Endothelial cell of umbilical vein (primary cell): ENCODE measurements at regions of chr7 and their contacts with region 1.

Region 1: DNA sequence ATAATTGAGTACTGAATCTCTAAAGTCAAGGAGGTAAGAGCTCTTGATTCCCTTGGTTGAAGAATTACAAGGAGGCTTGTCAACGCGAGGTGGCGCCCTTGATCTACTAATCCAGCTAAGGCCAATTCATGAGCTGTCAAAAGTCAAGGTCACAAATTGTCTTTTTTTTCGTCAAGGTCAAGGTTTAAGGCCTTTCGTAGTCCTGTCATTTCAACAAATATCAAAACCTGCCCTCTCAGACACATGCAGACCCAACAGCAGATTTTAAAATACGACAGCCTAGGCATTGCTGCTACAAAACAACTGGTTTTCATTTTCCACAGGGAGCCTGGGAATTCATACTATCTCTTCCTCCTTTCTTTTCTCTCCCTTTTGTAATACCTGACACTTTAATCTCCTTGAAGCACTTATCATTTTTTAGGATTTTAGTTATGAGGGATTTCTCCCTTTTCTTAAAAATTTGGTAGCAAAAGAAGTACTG is 3.6 kb downstream of the HOXA13 start:
- DNase-seq: peak; percentile 84
- H3K4me3 ChIP-seq: no peak overlapping the region
- H3K27ac ChIP-seq: no peak overlapping the region
- H3K4me1 ChIP-seq: peaks cover 16% of the 10 kb centered on the region
- H3K27me3 ChIP-seq: peaks cover 52 to 78% of the 10 kb centered on the region in 2 experiments
- CTCF ChIP-seq: peak; percentile 66 to 68
- POLR2A ChIP-seq: no peak

Region 2: DNA sequence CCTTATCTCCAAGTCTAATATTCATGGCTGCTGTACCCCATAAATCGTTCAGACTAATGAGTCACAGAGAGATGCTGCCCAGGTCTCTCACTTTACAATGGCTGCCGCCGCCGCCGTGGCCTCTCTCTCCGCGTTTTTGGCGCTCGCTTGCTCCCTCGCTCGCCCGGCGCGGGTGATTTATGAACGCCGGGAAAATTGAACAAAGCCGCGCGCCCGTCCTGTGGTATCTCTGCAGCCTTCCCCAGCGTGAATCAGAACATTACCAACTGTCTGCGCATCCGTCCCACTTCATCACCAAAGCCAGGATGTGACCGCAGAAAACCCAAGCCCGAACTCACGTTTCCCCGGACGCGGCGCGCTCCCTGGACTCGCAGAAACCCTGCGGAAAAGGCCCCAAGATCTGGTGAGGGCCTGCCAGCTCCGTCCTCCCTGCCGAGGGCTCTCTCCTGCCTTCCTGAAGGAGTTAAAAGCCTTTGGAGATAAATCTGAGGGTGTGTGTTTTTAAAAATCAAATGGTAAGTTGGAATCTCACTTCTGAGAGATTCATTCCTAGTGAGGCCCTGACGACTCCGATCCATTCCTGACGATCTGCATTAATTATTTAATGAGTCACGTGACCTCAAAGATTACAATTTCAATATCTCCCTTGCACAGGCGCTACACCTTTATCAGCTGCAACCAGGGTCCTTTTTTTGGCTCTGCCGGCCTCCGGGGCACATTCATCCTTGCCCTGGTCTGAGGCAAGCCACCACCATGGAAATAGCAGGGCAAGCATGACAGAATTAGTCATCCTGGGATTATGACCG is 72.0 kb before region 1 on chr7:
- CTCF ChIA-PET with region 1: no interaction called
- POLR2A ChIA-PET with region 1: no interaction called
- dilution Hi-C with region 1: no loop called
- intact Hi-C with region 1: no loop called
- DNase-seq: peak; percentile 58
- H3K4me3 ChIP-seq: peak overlapping the region in 1 of 3 experiments; percentile 36
- H3K27ac ChIP-seq: peak overlapping the region; percentile 96
- H3K4me1 ChIP-seq: peaks cover 75% of the 10 kb centered on the region
- H3K27me3 ChIP-seq: no peaks in the 10 kb centered on the region
- CTCF ChIP-seq: no peak
- POLR2A ChIP-seq: no peak

Region 3: GRCh38 chr7:27210441-27211083 is 14.2 kb after region 1 on chr7:
- CTCF ChIA-PET with region 1: interaction called, 22 read pairs
- POLR2A ChIA-PET with region 1: no interaction called
- dilution Hi-C with region 1: no loop called
- intact Hi-C with region 1: no loop called
- DNase-seq: no peak
- H3K4me3 ChIP-seq: peak overlapping the region in 1 of 3 experiments; percentile 29
- H3K27ac ChIP-seq: no peak overlapping the region
- H3K4me1 ChIP-seq: peaks cover 15% of the 10 kb centered on the region
- H3K27me3 ChIP-seq: peaks cover 73 to 77% of the 10 kb centered on the region in 2 experiments
- CTCF ChIP-seq: peak; percentile 56 to 82
- POLR2A ChIP-seq: no peak

Region 4: DNA sequence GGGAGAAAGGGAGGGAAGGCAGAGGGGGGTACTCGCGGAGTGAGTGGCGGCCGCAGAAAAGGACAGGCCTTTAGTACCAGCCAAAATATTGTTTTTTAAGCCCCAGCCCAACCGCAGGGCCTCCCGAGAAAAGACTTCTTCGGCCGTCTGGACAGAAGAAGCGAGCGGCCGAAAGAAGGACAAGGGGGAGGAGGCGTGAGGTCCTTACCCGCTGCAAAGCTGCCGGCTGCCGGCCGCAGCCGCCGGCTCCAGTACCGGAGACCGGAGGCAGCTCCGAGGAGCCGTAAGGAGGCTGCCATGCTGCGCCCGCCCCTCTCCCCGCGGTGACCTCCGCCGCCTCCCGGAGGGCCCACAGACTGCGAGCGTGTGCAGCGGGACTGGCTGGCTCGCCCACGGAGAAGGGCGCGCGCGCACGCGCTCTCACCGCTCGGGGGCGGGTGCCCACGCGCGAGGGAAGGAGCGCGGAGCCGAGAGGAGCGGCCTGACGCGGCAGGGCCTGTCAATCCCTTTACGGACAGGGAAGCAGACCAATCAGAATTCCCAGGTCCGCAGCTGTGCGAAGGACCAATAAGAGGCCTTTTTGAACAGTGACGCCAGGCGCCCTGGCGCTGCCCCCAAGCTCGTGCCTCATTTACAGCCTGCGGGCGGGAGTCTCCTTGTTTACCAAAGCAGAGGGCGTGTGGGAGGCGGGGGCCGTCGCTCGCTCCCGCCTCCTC is 466.3 kb after region 1 on chr7 and contains the start of gene HIBADH:
- CTCF ChIA-PET with region 1: interaction called, 12 read pairs
- POLR2A ChIA-PET with region 1: no interaction called
- dilution Hi-C with region 1: no loop called
- intact Hi-C with region 1: no loop called
- DNase-seq: peak; percentile 99
- H3K4me3 ChIP-seq: peak within 1 kb of the TSS; percentile 63 to 83 (median 69)
- H3K27ac ChIP-seq: peak within 1 kb of the TSS; percentile 74
- H3K4me1 ChIP-seq: peaks cover 7% of the 10 kb centered on the region
- H3K27me3 ChIP-seq: no peaks in the 10 kb centered on the region
- CTCF ChIP-seq: no peak
- POLR2A ChIP-seq: peak; percentile 70
- total RNA-seq, gene HIBADH: 19.7 and 22.6 TPM in 2 replicates

Region 5: DNA sequence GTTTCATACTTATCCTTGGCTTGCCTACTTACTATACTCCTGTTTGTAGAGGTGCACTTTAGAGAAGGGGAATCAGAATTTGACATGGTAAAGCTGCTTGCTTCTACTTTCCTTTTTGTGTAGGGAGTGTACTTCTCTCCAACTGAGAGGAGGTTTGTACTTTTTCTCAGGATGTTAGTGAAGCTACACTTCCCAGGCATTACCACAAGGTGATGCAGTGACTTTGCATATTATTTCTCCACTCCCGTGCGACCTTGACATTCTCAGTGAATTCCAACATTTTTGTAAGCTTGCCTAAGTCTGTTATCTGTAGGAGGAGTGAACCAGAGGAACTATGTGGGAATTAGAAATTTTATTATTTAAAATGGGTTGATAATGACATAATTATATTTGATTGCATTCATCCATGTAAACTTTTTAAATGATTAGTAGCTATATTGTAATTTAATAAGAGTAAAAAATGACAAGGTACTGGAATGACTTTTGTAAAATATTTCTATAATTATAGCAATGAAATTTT is 548.8 kb after region 1 on chr7:
- CTCF ChIA-PET with region 1: interaction called, 31 read pairs
- POLR2A ChIA-PET with region 1: no interaction called
- dilution Hi-C with region 1: no loop called
- intact Hi-C with region 1: loop called (anchors 1 kb)
- DNase-seq: peak; percentile 85
- H3K4me3 ChIP-seq: no peak overlapping the region
- H3K27ac ChIP-seq: peak overlapping the region; percentile 49
- H3K4me1 ChIP-seq: peaks cover 11% of the 10 kb centered on the region
- H3K27me3 ChIP-seq: no peaks in the 10 kb centered on the region
- CTCF ChIP-seq: peak; percentile 54 to 65
- POLR2A ChIP-seq: no peak

Region 6: DNA sequence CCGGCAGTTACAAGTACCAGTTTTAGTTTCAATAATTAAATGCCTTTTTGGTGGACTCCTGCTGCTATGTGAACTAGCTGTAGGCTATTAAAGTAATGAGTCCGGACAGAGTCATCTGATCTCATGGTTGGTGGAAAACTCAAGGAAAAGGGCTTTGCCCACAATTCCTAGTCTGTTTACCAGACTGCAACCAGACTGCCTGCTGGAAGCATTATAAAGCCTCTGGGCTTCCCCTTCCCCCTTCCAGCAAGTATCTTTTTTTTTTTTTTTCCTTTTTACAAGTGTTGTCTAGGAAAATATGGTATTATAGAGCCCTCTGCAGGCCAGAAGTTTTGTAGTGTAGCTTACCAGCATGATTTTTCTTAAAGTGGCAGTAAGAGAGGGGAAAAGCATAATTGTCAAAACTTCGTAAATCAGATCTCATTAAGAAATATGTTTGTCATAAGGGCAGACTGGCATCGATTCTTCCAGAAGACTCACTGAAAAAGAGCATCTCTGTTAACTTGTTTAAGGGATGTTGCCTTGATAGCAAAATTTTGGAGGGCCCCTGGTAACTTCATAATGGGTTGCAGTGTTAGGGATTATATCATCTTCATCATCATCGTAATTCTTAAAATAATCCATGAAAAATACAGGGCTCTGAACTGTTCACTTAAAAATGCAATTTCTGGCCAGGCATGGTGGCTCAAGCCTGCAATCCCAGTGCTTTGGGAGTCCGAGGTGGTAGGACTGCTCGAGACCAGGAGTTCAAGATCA is 724.9 kb after region 1 on chr7:
- CTCF ChIA-PET with region 1: interaction called, 148 read pairs
- POLR2A ChIA-PET with region 1: no interaction called
- dilution Hi-C with region 1: no loop called
- intact Hi-C with region 1: loop called (anchors 1 kb)
- DNase-seq: peak; percentile 94
- H3K4me3 ChIP-seq: no peak overlapping the region
- H3K27ac ChIP-seq: no peak overlapping the region
- H3K4me1 ChIP-seq: peaks cover 37% of the 10 kb centered on the region
- H3K27me3 ChIP-seq: no peaks in the 10 kb centered on the region
- CTCF ChIP-seq: peak; percentile 42 to 45
- POLR2A ChIP-seq: no peak

Region 7: DNA sequence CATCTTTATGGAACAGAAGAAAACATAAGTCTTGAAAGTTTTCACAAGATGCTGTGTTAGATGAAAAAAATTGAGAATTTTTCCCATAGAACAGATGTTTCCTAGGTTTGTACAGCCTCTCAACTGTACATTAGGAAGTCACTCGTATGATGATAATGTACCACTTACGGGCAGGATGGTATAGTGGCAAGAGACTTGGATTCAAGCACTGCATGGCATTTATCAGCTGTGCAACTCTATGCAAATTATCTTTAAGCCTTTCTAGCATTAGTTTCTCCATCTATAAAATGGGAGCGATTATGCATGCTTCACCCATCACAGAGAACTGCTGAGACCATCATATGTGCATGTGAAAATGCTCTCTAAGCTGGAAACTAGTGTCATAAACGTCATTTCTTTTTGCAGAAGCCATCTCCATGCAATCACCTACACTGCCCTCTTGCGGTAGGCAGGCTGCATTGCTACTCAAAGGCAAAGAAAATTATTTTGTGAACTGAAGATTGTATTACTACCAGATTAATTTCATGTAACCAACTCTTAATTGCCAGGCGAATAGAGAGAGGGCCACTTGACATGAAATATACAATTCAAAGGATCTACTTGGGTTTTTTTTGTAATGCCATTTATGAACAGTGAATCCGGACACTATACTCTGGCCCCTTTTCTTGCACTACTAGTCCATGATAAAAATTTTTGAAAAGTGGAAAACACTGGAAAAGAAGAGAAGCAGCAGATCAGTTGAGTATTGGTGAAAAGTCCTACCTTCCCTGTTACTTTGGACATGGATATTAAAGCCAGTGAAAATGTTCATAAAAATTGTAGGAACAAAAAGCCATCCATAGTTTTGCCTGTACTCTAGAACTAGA is 881.9 kb after region 1 on chr7:
- CTCF ChIA-PET with region 1: interaction called, 61 read pairs
- POLR2A ChIA-PET with region 1: no interaction called
- dilution Hi-C with region 1: no loop called
- intact Hi-C with region 1: loop called (anchors 1 kb)
- DNase-seq: peak; percentile 49
- H3K4me3 ChIP-seq: no peak overlapping the region
- H3K27ac ChIP-seq: no peak overlapping the region
- H3K4me1 ChIP-seq: peaks cover 7% of the 10 kb centered on the region
- H3K27me3 ChIP-seq: no peaks in the 10 kb centered on the region
- CTCF ChIP-seq: peak; percentile 90 to 98
- POLR2A ChIP-seq: no peak